Heart left ventricle (tissue), 16 donors: ENCODE measurements at regions of chr11 and their contacts with region 1.

Region 1: GRCh38 chr11:6234387-6235107 is at the start of gene FHIP1B:
- DNase-seq: peak; percentile 100
- ATAC-seq: peak; percentile 98 to 99 (median 99)
- H3K4me3 ChIP-seq: peak within 1 kb of the TSS; percentile 28 to 95 (median 83)
- H3K27ac ChIP-seq: peak within 1 kb of the TSS in 11 of 12 donors; percentile 74 to 91 (median 82)
- H3K4me1 ChIP-seq: peaks cover 0 to 36% (median 14%) of the 10 kb centered on the region in 12 donors
- H3K27me3 ChIP-seq: no peaks in the 10 kb centered on the region
- CTCF ChIP-seq: no peak
- POLR2A ChIP-seq: peak in 1 of 2 donors; percentile 45
- total RNA-seq, gene FHIP1B: 13.1 to 30.3 (median 16.3) TPM

Region 2: GRCh38 chr11:6307876-6308275 is 73.3 kb after region 1 on chr11:
- intact Hi-C with region 1: loop called in 1 of 10 experiments (anchors 2 kb)
- DNase-seq: no peak
- ATAC-seq: no peak
- H3K4me3 ChIP-seq: no peak overlapping the region
- H3K27ac ChIP-seq: no peak overlapping the region
- H3K4me1 ChIP-seq: no peaks in the 10 kb centered on the region
- H3K27me3 ChIP-seq: peaks cover 0 to 7% (median 0%) of the 10 kb centered on the region in 9 donors
- CTCF ChIP-seq: no peak
- POLR2A ChIP-seq: no peak

Region 3: GRCh38 chr11:6473481-6474422 is 239.2 kb after region 1 on chr11 and contains the start of gene TRIM3:
- intact Hi-C with region 1: loop called in 1 of 10 experiments (anchors 10 kb)
- DNase-seq: peak; percentile 96 to 97 (median 96)
- ATAC-seq: peak; percentile 70 to 93 (median 88)
- H3K4me3 ChIP-seq: peak within 1 kb of the TSS; percentile 62 to 99 (median 86)
- H3K27ac ChIP-seq: peak within 1 kb of the TSS; percentile 84 to 97 (median 93)
- H3K4me1 ChIP-seq: peaks cover 0 to 35% (median 19%) of the 10 kb centered on the region in 12 donors
- H3K27me3 ChIP-seq: no peaks in the 10 kb centered on the region
- CTCF ChIP-seq: peak in 4 of 12 donors; percentile 23 to 47 (median 40)
- POLR2A ChIP-seq: peak; percentile 83 to 87
- total RNA-seq, gene TRIM3: 7.7 to 18.8 (median 10.4) TPM